ENCODE measurements at regions of chr14 and their contacts with region 1.

Region 1: GRCh38 chr14:102235275-102235897 is 69.6 kb downstream of the MOK start:
- DNase-seq: peak; percentile 71 to 82
- H3K4me3 ChIP-seq: no peak overlapping the region
- H3K4me3 Mint-ChIP-seq: no peak overlapping the region
- H3K27ac Mint-ChIP-seq: no peak overlapping the region
- H3K4me1 ChIP-seq: no peaks in the 10 kb centered on the region
- H3K4me1 Mint-ChIP-seq: no peaks in the 10 kb centered on the region
- H3K27me3 ChIP-seq: no peaks in the 10 kb centered on the region; the same call in 1 of the 2 replicates
- H3K27me3 Mint-ChIP-seq: peaks cover under 1% of the 10 kb centered on the region
- CTCF ChIP-seq: peak; percentile 55 to 94

Region 2: DNA sequence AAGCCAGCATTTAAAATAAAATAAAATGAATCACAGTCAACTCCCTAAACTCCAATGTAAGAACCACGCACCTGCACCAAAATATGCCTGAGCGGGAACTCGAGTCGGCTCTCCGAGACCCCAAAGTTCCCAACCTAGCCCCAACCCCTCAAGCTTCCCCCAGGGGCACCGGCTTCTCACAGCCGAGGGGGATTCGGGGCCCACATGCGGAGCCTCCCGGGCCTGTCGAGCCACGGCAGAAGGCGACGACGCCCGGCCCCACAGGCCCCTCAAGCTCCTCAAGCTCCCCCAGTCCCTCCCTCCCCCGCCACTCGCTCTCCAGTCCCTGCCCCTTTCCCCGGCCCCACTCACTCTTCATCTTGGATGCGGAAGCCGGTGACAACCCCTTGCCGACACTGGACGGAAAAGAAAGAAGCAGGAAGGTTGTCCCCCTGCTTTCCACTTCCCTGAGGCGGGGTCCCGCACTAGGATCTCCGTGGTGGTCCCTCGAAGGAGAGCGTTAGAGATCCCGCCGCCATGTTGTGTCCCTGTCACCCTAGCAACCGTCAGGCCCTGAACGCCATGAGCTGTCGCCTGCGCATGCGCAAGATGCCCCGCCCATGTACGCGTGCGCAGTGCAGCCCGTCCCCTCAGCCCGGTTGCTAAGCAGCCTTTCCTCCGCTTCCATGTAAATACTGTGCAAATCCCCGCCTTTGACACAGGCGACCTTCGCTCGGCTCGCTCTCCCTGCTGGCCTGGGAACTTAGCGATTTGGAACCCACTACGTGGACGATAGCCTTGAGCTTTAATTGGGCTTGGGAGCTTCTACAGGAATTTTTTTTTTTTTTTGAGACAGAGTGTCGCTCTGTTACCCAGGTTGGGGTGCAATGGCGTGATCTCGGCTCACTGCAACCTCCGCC is 69.5 kb after region 1 on chr14 and contains the start of gene MOK:
- CTCF ChIA-PET with region 1: no interaction called
- POLR2A ChIA-PET with region 1: no interaction called
- intact Hi-C with region 1: loop called (anchors 2 kb)
- DNase-seq: peak; percentile 96 to 99
- H3K4me3 ChIP-seq: peak within 1 kb of the TSS; percentile 80
- H3K4me3 Mint-ChIP-seq: peak within 1 kb of the TSS; percentile 96
- H3K27ac Mint-ChIP-seq: peak within 1 kb of the TSS; percentile 97
- H3K4me1 ChIP-seq: 0 out of 2 replicates have a peak, but pooled peaks cover 3% of the 10 kb centered on the region
- H3K4me1 Mint-ChIP-seq: no peaks in the 10 kb centered on the region
- H3K27me3 ChIP-seq: no peaks in the 10 kb centered on the region
- H3K27me3 Mint-ChIP-seq: peaks cover 9% of the 10 kb centered on the region
- CTCF ChIP-seq: no peak
- total RNA-seq, gene MOK: 1.4 and 2.0 TPM in 2 replicates

Region 3: GRCh38 chr14:102509744-102510615 is 274.6 kb after region 1 on chr14 and contains the start of gene ANKRD9:
- CTCF ChIA-PET with region 1: no interaction called
- POLR2A ChIA-PET with region 1: no interaction called
- intact Hi-C with region 1: no loop called
- DNase-seq: peak; percentile 93 to 96
- H3K4me3 ChIP-seq: peak within 1 kb of the TSS; percentile 64
- H3K4me3 Mint-ChIP-seq: peak within 1 kb of the TSS; percentile 90
- H3K27ac Mint-ChIP-seq: peak within 1 kb of the TSS; percentile 66
- H3K4me1 ChIP-seq: peaks cover 24% of the 10 kb centered on the region
- H3K4me1 Mint-ChIP-seq: no peaks in the 10 kb centered on the region
- H3K27me3 ChIP-seq: no peaks in the 10 kb centered on the region
- H3K27me3 Mint-ChIP-seq: no peaks in the 10 kb centered on the region
- CTCF ChIP-seq: no peak
- total RNA-seq, gene ANKRD9: 15.0 and 15.5 TPM in 2 replicates

Measured in Caco-2 (cell line).